Dendritic cell treated with granulocyte-macrophage colony-stimulating factor and Interleukin-4, amounts not matched to agents 40 ng/mL and 50 ng/mL, for 4 days (primary cell): ENCODE measurements at regions of chr12 and their contacts with region 1.

Region 1: DNA sequence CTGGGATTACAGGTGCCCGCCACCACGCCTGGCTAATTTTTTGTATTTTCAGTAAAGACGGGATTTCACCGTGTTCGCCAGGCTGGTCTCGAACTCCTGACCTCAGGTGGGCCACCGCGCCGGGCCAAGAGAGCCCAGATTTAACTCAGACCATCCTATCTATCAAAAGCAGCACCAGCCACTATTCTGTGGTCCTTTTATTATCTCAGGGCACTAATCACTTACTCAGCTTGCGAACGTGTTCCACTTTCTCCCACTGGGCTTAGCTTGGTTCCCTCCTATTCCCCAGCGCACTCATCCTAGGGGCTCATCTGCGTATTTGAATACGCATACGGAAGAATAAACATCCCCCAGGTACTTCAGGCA is 16.2 kb upstream of the AACS start:
- H3K4me3 Mint-ChIP-seq: peak overlapping the region; percentile 81
- H3K27ac Mint-ChIP-seq: peak overlapping the region; percentile 82
- H3K4me1 Mint-ChIP-seq: peaks cover 5% of the 10 kb centered on the region
- H3K27me3 Mint-ChIP-seq: no peaks in the 10 kb centered on the region

Region 2: GRCh38 chr12:124992874-124993625 is 56.0 kb before region 1 on chr12:
- intact Hi-C with region 1: loop called (anchors 1 kb)
- H3K4me3 Mint-ChIP-seq: peak overlapping the region; percentile 70
- H3K27ac Mint-ChIP-seq: peak overlapping the region; percentile 60
- H3K4me1 Mint-ChIP-seq: peaks cover 40% of the 10 kb centered on the region
- H3K27me3 Mint-ChIP-seq: no peaks in the 10 kb centered on the region

Region 3: DNA sequence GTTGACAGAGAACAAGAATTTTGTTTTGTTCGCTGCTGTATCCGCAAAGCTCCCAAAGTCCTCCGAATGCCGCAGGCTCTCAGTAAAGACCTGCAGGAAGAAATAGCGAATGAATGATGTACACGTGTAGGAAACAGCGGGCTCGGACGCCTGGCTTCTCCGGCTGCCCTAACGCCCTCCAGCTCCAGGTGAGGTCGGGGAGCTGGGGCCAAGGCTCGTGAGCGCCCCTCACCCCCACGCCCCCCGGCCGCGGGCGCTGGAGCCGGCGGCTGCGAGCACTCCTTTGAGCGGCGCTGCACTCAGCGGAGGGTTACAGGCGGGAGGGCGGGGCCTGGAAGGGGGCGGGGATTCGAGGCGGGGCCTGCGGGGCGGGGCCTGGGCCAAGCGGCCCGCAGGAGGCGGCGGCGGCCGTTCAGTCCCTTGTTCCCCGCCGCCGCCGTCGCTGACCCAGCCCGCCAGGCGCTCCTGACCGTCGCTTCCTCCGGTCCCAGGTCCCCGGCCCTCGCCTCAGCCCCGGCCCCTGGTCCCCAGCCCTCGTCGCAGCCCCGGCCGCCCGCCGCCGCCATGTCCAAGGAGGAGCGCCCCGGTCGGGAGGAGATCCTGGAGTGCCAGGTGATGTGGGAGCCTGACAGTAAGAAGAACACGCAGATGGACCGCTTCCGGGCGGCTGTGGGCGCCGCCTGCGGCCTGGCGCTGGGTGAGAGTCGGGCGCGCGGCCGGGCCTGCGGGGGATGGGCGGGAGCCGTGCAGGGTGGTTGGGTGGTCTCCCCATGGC is 16.1 kb after region 1 on chr12 and contains the start of gene AACS:
- intact Hi-C with region 1: loop called (anchors 1 kb)
- H3K4me3 Mint-ChIP-seq: peak within 1 kb of the TSS; percentile 82
- H3K27ac Mint-ChIP-seq: peak within 1 kb of the TSS; percentile 50
- H3K4me1 Mint-ChIP-seq: peaks cover 27% of the 10 kb centered on the region
- H3K27me3 Mint-ChIP-seq: peaks cover 32% of the 10 kb centered on the region

Region 4: DNA sequence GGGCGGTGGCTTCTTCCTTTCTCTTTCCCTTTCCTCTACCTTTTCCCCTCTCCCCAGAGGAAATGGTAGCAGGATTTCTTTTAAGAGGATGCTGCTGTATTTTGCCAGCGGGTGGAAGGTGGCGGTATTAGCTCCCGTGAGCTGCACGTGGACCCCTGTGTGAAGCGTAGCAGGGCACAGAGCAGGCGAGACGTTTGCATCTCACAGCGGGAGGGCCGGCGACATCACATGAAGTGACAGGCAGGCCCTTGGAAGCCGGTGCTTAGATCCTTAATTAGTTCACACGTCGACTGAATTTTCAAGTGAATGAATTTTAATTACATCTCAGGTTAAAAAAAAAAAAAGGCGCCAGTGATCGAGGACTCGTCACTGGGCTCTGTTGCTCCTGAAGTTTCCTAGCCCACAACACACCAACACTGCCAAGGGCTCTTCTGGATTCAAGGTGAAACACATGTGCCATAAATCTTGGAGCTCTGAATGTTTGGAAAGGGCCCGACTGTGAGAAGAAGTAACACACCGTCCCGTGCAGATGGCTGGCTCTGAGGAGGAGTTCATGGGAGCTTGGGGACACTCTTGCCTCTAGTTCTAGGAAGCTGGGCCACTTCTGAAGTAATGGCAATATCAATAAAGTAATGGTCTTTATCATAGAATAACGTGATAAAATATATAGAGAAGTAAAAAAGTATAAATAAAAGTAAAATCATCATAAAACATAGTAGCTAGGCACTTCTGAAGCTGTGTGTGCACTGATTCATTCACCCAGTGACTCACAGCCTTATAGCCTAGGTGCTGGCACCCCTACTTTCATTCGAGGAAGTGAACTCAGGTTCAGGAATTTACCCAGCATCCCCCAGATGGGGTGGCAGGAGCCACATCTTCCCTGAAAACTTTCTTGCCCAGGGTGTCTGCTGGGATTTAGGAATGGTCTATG is 91.5 kb after region 1 on chr12:
- intact Hi-C with region 1: no loop called
- H3K4me3 Mint-ChIP-seq: no peak overlapping the region
- H3K27ac Mint-ChIP-seq: no peak overlapping the region
- H3K4me1 Mint-ChIP-seq: no peaks in the 10 kb centered on the region
- H3K27me3 Mint-ChIP-seq: no peaks in the 10 kb centered on the region

Region 5: GRCh38 chr12:125159683-125160082 is 110.6 kb after region 1 on chr12:
- intact Hi-C with region 1: no loop called
- H3K4me3 Mint-ChIP-seq: no peak overlapping the region
- H3K27ac Mint-ChIP-seq: no peak overlapping the region
- H3K4me1 Mint-ChIP-seq: no peaks in the 10 kb centered on the region
- H3K27me3 Mint-ChIP-seq: peaks cover 2% of the 10 kb centered on the region